ENCODE measurements at regions of chr15 and their contacts with region 1.

Region 1: GRCh38 chr15:70875001-70875782 is 17.0 kb downstream of the THAP10 start:
- DNase-seq: peak; percentile 21 to 29
- H3K4me3 ChIP-seq: no peak overlapping the region
- H3K27ac ChIP-seq: peak overlapping the region; percentile 2 to 60 (median 35)
- H3K4me1 ChIP-seq: peaks cover 23 to 54% of the 10 kb centered on the region in 2 donors
- H3K27me3 ChIP-seq: no peaks in the 10 kb centered on the region
- CTCF ChIP-seq: peak in 5 of 6 experiments; percentile 27 to 65 (median 55)
- POLR2A ChIP-seq: no peak

Region 2: DNA sequence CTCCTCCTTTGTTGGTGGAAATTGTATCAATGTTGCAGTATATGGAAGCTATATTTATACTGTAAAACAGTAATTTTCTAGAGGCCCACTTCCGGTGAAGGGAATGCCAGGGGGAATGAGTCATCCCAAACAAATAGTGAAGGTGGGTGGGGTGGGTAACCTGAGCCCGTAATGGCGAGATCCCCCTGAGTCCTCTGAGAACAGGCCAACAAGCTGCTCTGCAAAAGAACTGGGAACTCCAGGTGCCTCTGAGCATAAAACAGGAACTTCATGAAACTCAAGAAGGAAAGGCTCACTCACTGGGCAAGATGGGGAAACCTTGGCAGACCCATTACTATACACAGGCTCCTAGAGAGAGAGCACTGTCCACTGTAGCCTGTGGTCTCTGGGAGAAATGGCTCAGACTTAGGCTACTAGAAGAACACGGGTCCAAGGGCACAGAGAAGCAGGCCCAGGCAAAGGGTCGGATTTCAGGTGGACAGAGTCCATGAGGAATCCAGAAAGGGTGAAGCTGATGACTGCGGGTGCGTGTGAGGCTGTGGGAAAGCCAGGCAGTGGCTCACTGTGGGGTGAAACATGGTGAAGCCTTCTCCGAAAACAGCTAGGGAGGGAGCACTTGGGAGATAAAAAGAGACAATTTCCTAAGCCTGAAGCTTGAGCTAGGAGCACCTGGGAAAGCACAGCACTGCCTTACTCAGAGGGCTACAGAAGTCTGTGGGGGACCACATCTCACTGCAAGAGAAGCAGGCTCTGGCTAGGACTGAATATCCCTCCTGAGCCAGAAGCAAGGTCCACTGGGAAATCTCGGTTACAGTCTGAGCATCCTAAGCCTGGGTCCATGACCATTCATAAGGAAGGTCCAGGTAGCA is 41.1 kb before region 1 on chr15:
- intact Hi-C with region 1: loop called (anchors 5 kb)
- DNase-seq: no peak
- H3K4me3 ChIP-seq: no peak overlapping the region
- H3K27ac ChIP-seq: peak overlapping the region in 2 of 3 donors; percentile 56 to 57
- H3K4me1 ChIP-seq: peaks cover 4 to 26% of the 10 kb centered on the region in 2 donors
- H3K27me3 ChIP-seq: no peaks in the 10 kb centered on the region
- CTCF ChIP-seq: no peak
- POLR2A ChIP-seq: no peak

Measured in thyroid gland (tissue), 4 donors.